Gastrocnemius medialis (tissue), 4 donors: ENCODE measurements at regions of chr20 and their contacts with region 1.

Region 1: DNA sequence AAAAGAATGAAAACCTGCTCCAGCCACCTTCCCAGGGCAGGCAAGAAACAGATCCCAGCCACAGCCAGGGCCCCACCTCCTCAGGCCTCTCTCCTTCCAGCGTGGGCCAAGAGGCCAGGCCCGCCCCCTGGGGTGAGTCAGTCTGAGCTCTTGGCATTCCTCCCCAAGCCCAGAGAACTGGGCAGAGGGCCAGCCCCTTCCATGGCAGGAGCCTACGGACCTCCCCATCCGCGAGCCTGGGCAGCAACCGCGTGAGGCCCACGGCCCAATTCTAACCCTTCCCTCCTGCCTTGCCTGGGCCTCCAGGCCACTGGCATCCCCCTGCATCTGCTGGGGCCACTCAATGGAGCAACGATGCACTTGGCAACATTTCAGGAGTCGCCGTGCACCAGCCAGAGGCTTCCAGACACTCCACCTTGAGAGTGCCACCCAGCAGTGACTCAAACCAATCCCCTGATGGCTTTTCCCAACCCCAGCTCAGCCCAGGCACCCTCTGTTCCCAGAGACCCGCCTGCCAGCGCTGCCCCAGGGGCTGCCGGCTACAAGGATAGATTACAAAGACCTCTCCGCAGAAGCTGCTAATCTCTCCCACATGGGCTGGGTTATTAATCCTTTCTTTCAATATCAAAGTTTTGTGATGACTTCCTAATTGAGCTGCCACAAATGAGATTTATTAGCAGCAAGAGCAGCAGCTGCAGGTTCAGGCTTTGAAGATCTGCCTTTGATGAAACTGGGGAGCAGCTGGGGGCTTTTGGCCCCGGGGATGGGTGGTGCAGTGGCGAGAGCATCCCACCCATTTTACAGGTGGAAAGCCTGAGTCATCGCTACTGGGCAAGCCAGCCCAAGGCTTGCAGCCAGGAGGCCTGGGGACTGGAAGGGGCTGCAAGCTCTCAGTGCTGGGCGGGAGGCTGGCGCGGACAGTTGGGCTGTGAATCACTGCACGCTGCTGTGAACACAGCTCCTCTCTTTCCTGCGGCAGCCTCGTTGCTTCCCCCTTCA is 85.7 kb downstream of the NFATC2 start:
- DNase-seq: peak; percentile 87 to 96
- ATAC-seq: peak; percentile 99
- H3K4me3 ChIP-seq: peak overlapping the region; percentile 29 to 47 (median 36)
- H3K27ac ChIP-seq: peak overlapping the region; percentile 71 to 81 (median 79)
- H3K4me1 ChIP-seq: peaks cover 16 to 17% of the 10 kb centered on the region in 2 donors
- H3K27me3 ChIP-seq: no peaks in the 10 kb centered on the region
- CTCF ChIP-seq: no peak
- POLR2A ChIP-seq: no peak

Region 2: DNA sequence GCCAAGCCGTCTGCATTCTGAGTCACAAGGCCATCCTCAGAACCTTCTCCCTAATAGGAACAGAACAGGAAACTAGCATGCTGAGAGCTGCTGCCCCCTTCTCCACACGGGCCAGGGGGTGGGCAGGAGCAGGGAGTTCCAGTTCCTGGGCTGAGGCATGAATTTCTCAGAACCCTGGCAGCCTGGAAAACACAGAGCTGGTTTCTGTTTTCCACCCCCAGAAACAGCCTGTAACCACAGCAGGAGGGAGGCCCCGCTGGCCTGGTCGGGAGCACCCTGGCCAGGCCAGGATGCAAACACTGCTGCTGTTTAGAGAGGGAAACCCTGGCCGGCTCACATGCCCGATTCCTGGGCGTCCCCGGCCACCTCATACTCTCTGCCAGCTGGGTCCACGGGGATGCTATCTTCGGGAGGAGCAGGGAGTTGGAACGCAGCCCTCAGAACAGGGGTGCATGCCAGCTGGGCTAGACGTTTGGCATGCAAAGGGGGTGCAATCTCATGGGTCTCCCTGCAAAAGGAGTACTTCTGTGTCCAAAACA is 44.4 kb before region 1 on chr20:
- in situ Hi-C with region 1: no loop called
- intact Hi-C with region 1: loop called (anchors 2 kb)
- DNase-seq: peak in 1 of 2 donors; percentile 26
- ATAC-seq: peak; percentile 22 to 34
- H3K4me3 ChIP-seq: peak overlapping the region; percentile 3 to 28 (median 18)
- H3K27ac ChIP-seq: peak overlapping the region; percentile 46 to 77 (median 58)
- H3K4me1 ChIP-seq: peaks cover 18 to 19% of the 10 kb centered on the region in 2 donors
- H3K27me3 ChIP-seq: no peaks in the 10 kb centered on the region
- CTCF ChIP-seq: no peak
- POLR2A ChIP-seq: no peak

Region 3: DNA sequence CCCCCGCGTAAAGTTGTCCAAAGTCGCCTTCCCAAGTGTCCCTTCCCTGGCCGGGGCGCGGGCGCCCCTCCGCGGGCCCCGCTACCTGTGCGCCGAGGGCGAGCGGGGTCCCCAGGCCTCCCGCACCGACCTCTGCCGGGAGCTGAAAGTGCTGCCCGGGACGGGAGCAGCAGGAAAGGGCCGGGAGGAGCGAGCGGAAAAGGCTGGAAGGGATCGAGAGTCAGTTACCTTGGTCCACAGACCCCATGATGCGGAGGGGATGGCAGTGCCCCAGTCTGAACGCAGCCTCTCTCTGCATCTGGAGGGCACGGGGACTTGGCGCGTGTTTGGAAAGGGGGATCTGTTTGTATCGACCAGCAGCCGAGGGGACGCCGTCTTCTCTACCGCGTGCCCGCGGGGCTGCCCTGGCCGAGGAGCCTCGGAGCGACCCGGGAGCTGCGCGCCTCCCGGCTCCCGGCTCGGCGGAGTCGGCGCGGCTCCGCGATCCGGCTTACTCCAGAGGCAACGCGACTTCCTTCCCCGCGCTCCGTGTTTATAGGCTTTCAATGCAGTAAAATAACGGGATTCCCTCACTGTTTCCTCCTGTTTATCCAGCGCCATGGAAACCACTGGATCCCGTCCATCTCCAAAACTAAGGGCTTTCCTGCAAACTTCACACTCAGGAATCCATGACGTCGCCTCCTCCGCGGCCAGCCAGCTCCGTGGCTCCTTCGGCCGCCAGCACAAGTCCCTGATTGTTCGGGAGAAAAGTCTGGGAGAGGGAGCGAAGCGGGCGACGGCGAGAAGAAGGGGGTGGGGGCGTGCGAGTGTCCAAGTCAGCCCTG is 105.7 kb after region 1 on chr20:
- in situ Hi-C with region 1: loop called in 1 of 4 experiments (anchors 10 kb)
- intact Hi-C with region 1: no loop called
- DNase-seq: peak; percentile 36 to 41
- ATAC-seq: peak; percentile 56 to 61
- H3K4me3 ChIP-seq: peak overlapping the region; percentile 57 to 72 (median 64)
- H3K27ac ChIP-seq: peak overlapping the region; percentile 45 to 83 (median 72)
- H3K4me1 ChIP-seq: peaks cover 35 to 37% of the 10 kb centered on the region in 2 donors
- H3K27me3 ChIP-seq: no peaks in the 10 kb centered on the region
- CTCF ChIP-seq: peak in 4 of 5 experiments; percentile 12 to 40 (median 23)
- POLR2A ChIP-seq: peak; percentile 12 to 42